IMR-90 (cell line): ENCODE measurements at regions of chr4 and their contacts with region 1.

Region 1: DNA sequence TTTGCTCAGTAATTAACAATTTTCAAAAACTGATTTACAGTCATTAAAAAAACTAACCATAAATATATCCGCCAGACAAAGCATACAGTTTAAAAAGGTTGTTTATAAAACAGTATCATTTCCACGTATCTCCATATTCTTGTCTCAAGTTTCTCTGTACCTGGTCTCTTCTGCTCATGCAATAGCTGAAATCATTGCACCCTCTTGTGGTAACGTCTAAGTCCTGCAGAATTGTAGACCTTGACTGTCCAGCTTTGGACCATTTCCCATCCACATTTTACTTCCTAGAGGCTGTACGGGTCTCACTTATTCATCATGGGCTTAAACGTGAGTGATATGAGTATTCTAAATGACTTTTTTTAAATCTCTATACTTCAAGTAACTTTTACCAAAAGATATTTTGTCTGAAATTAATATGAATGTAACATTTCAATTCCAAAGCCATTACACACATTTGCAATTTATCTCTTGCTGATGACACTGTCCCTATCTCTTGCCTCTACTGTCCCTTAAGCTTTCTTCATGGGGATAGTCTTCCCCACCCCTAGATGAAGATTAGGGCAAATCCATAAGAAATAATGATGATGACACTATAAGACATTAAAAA is 118.5 kb downstream of the BTC start:
- DNase-seq: peak; percentile 76
- ATAC-seq: peak; percentile 93
- H3K4me3 ChIP-seq: no peak overlapping the region
- H3K27ac ChIP-seq: no peak overlapping the region
- H3K4me1 ChIP-seq: no peaks in the 10 kb centered on the region
- H3K27me3 ChIP-seq: peaks cover 1% of the 10 kb centered on the region; the same call in 1 of the 2 replicates
- CTCF ChIP-seq: peak; percentile 89
- POLR2A ChIP-seq: no peak
- RAD21 ChIP-seq: peak; percentile 97

Region 2: GRCh38 chr4:74320559-74321118 is 355.1 kb before region 1 on chr4:
- CTCF ChIA-PET with region 1: interaction called, 29 read pairs
- POLR2A ChIA-PET with region 1: no interaction called
- dilution Hi-C with region 1: no loop called
- in situ Hi-C with region 1: loop called (anchors 5 kb)
- intact Hi-C with region 1: loop called (anchors 1 kb)
- DNase-seq: peak; percentile 55
- ATAC-seq: peak; percentile 83
- H3K4me3 ChIP-seq: no peak overlapping the region
- H3K27ac ChIP-seq: no peak overlapping the region
- H3K4me1 ChIP-seq: no peaks in the 10 kb centered on the region
- H3K27me3 ChIP-seq: peaks cover 4% of the 10 kb centered on the region
- CTCF ChIP-seq: peak; percentile 74
- POLR2A ChIP-seq: no peak
- RAD21 ChIP-seq: peak; percentile 82

Region 3: DNA sequence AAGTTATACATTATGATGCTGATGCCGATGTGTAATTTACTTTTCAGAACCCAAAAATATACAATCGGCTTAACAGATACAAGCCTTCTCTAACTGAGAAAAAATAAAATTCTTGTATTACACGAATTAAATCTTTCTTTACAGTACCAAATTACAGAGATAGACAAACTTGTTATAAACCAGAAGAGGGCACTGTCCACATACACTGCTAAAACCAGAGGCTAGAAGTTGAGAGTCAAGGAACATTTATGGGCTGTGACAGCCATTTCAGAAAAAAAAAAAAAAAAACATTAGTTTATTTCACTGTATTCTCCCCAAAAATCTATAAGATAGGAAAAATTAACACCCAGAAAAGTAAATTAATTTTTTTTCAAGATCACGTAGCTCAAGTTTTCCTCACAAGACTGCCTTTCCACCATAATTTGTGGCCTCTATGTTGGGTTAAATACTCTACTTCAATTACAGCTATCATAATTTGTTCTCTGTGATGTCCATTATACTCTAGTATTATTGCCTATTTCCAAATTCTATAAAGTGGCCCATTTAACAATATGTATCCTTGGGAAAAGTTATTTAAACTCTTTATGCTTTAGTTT is 298.8 kb before region 1 on chr4:
- CTCF ChIA-PET with region 1: interaction called, 7 read pairs
- POLR2A ChIA-PET with region 1: no interaction called
- dilution Hi-C with region 1: no loop called
- in situ Hi-C with region 1: loop called (anchors 5 kb)
- intact Hi-C with region 1: loop called (anchors 1 kb)
- DNase-seq: peak; percentile 77
- ATAC-seq: peak; percentile 90
- H3K4me3 ChIP-seq: no peak overlapping the region
- H3K27ac ChIP-seq: no peak overlapping the region
- H3K4me1 ChIP-seq: no peaks in the 10 kb centered on the region
- H3K27me3 ChIP-seq: no peaks in the 10 kb centered on the region
- CTCF ChIP-seq: peak; percentile 81
- POLR2A ChIP-seq: no peak
- RAD21 ChIP-seq: peak; percentile 90

Region 4: DNA sequence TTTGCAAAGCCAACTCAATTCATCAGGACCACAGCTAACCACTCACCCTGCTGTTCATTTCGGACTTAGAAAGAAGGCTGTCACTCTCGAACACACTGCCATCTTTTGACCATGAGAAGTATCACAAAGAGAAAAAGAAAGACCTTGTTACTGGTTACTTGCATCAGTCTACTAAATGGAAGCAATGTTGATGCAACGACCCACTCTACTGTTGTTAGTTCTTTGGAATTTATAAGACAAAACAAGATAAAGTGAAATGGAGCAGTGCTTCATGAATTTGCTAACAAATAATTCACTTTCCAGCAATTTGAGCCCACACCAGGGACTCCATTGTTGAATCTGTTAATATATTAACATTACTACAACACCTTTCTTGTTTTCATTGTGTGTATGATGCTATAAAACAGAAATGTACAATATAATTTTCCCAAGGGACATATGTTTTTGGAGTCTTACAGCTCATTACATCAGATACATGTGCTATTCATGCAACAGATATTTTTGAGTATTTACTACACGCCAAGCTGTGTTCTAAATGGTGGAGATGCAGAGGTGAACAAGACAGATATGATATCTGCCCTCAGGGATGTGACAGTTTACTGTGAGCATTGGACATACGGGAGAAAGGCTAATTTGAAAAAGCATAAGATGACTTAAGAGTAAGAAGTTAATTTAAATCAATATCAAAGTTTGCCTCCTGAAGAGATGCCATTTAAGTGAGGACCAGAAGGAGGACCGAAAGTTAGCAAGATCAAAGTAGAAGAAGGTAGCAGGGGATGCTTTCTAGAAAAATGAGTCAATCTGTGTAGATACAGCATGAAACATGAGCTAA is 143.6 kb before region 1 on chr4:
- CTCF ChIA-PET with region 1: interaction called, 6 read pairs
- POLR2A ChIA-PET with region 1: no interaction called
- dilution Hi-C with region 1: no loop called
- in situ Hi-C with region 1: loop called (anchors 5 kb)
- intact Hi-C with region 1: loop called (anchors 2 kb)
- DNase-seq: peak; percentile 87
- ATAC-seq: peak; percentile 88
- H3K4me3 ChIP-seq: no peak overlapping the region
- H3K27ac ChIP-seq: no peak overlapping the region
- H3K4me1 ChIP-seq: peaks cover 4% of the 10 kb centered on the region; the same call in 1 of the 2 replicates
- H3K27me3 ChIP-seq: no peaks in the 10 kb centered on the region
- CTCF ChIP-seq: peak; percentile 78
- POLR2A ChIP-seq: no peak
- RAD21 ChIP-seq: peak; percentile 78

Region 5: DNA sequence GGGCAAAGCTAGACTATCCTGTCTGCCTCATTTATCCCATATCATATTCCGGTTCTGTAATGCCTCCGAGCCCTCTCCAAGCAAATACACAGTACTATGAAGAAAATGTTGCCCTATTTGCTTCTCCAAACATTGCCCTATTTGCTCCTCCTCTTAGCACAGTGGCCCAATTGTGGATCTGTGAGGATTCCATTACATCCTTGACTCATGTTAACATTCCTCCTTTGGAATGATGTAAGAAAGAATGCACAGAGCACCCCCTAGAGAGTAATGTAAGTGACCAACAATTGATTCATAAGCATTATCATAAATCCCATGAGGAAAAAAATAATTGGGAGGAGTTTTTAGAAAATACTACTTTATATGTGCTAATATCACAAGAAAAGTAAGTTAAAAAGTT is 129.8 kb after region 1 on chr4:
- CTCF ChIA-PET with region 1: no interaction called
- POLR2A ChIA-PET with region 1: no interaction called
- dilution Hi-C with region 1: no loop called
- in situ Hi-C with region 1: no loop called
- intact Hi-C with region 1: no loop called
- DNase-seq: peak; percentile 66
- ATAC-seq: peak; percentile 79
- H3K4me3 ChIP-seq: no peak overlapping the region
- H3K27ac ChIP-seq: no peak overlapping the region
- H3K4me1 ChIP-seq: no peaks in the 10 kb centered on the region
- H3K27me3 ChIP-seq: no peaks in the 10 kb centered on the region
- CTCF ChIP-seq: 0 out of 2 replicates have a peak, but pooled peaks have one; percentile 6
- POLR2A ChIP-seq: no peak
- RAD21 ChIP-seq: no peak